B cell (primary cell): ENCODE measurements at regions of chr9 and their contacts with region 1.

Region 1: DNA sequence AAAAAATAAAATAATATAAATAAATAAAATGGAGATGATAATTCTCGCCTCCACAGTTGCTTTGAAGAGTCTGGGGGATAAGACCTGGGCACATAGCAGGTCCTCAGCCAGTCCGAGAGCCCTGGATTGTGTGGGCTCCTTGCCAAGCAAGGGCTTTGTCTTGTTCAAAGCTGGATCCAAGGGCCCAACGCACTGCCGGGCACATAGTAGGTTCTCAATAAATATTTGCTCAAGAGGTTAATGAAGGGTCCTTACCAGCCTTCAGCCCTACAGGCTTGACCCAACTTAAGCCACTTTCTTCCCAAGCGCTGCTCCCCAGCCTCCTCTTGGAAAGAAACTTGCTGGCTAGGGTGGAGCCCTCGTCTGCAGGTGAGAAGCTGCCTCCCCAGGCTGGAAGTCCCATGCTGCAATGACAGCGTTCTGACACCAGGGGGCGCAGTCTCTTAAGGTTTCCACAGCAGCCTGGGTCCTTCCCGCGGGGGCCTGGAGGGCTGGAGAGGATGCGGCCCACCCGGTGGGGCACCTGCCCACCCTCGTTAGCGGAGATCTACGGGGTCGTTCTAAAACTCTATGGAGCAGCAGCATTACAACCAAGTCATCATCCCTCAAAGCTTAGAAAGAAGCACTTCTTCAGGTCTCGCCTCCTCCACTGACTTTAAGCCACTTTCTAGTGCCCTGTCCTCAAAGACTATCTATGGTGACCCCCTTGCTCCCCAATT is 115.2 kb downstream of the LHX2 start:
- DNase-seq: peak; percentile 87
- ATAC-seq: peak; percentile 88
- H3K4me3 ChIP-seq: no peak overlapping the region
- H3K4me3 Mint-ChIP-seq: peak overlapping the region; percentile 2
- H3K27ac ChIP-seq: no peak overlapping the region
- H3K27ac Mint-ChIP-seq: peak overlapping the region; percentile 74
- H3K4me1 ChIP-seq: peaks cover 4 to 16% of the 10 kb centered on the region in 2 donors
- H3K4me1 Mint-ChIP-seq: peaks cover 21% of the 10 kb centered on the region
- H3K27me3 ChIP-seq: no peaks in the 10 kb centered on the region
- H3K27me3 Mint-ChIP-seq: no peaks in the 10 kb centered on the region
- CTCF ChIP-seq: peak; percentile 99

Region 2: GRCh38 chr9:124218438-124218982 is 91.8 kb after region 1 on chr9:
- CTCF ChIA-PET with region 1: interaction called, 26 read pairs
- POLR2A ChIA-PET with region 1: no interaction called
- intact Hi-C with region 1: loop called (anchors 2 kb)
- DNase-seq: peak; percentile 90
- ATAC-seq: peak; percentile 62
- H3K4me3 ChIP-seq: peak overlapping the region in 1 of 5 experiments; percentile 40
- H3K4me3 Mint-ChIP-seq: peak overlapping the region; percentile 78
- H3K27ac ChIP-seq: peak overlapping the region; percentile 94 to 95
- H3K27ac Mint-ChIP-seq: peak overlapping the region; percentile 98
- H3K4me1 ChIP-seq: peaks cover 67 to 82% of the 10 kb centered on the region in 2 donors
- H3K4me1 Mint-ChIP-seq: peaks cover 85% of the 10 kb centered on the region
- H3K27me3 ChIP-seq: no peaks in the 10 kb centered on the region
- H3K27me3 Mint-ChIP-seq: no peaks in the 10 kb centered on the region
- CTCF ChIP-seq: no peak

Region 3: GRCh38 chr9:124267271-124267807 is 140.6 kb after region 1 on chr9:
- CTCF ChIA-PET with region 1: interaction called, 11 read pairs
- POLR2A ChIA-PET with region 1: no interaction called
- intact Hi-C with region 1: no loop called
- DNase-seq: peak; percentile 70
- ATAC-seq: peak; percentile 54
- H3K4me3 ChIP-seq: no peak overlapping the region
- H3K4me3 Mint-ChIP-seq: peak overlapping the region; percentile 74
- H3K27ac ChIP-seq: peak overlapping the region; percentile 73
- H3K27ac Mint-ChIP-seq: peak overlapping the region; percentile 91
- H3K4me1 ChIP-seq: peaks cover 69 to 98% of the 10 kb centered on the region in 2 donors
- H3K4me1 Mint-ChIP-seq: peaks cover 83% of the 10 kb centered on the region
- H3K27me3 ChIP-seq: no peaks in the 10 kb centered on the region
- H3K27me3 Mint-ChIP-seq: no peaks in the 10 kb centered on the region
- CTCF ChIP-seq: no peak

Region 4: DNA sequence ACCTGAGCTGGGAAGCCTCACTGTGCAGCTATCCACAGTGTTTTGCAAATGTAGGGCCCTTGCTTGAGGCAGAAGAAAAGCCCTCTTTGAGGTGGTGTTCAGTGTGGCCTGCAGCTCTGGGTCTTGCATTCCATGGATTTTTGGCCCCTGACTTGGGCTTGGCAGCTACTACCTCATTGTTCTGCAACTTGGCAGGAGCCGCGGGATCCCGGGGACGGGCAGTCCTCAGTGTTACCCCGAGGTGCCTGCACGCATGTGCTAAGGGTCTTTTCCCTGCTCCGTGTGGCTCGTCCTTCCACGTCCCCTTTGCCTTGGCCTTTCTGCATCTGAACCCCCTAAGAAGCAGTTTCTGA is 170.8 kb after region 1 on chr9:
- CTCF ChIA-PET with region 1: interaction called, 60 read pairs
- POLR2A ChIA-PET with region 1: interaction called, 5 read pairs
- intact Hi-C with region 1: loop called (anchors 1 kb)
- DNase-seq: no peak
- ATAC-seq: no peak
- H3K4me3 ChIP-seq: no peak overlapping the region
- H3K4me3 Mint-ChIP-seq: no peak overlapping the region
- H3K27ac ChIP-seq: no peak overlapping the region
- H3K27ac Mint-ChIP-seq: no peak overlapping the region
- H3K4me1 ChIP-seq: peaks cover 54 to 66% of the 10 kb centered on the region in 2 donors
- H3K4me1 Mint-ChIP-seq: peaks cover 69% of the 10 kb centered on the region
- H3K27me3 ChIP-seq: no peaks in the 10 kb centered on the region
- H3K27me3 Mint-ChIP-seq: no peaks in the 10 kb centered on the region
- CTCF ChIP-seq: no peak

Region 5: DNA sequence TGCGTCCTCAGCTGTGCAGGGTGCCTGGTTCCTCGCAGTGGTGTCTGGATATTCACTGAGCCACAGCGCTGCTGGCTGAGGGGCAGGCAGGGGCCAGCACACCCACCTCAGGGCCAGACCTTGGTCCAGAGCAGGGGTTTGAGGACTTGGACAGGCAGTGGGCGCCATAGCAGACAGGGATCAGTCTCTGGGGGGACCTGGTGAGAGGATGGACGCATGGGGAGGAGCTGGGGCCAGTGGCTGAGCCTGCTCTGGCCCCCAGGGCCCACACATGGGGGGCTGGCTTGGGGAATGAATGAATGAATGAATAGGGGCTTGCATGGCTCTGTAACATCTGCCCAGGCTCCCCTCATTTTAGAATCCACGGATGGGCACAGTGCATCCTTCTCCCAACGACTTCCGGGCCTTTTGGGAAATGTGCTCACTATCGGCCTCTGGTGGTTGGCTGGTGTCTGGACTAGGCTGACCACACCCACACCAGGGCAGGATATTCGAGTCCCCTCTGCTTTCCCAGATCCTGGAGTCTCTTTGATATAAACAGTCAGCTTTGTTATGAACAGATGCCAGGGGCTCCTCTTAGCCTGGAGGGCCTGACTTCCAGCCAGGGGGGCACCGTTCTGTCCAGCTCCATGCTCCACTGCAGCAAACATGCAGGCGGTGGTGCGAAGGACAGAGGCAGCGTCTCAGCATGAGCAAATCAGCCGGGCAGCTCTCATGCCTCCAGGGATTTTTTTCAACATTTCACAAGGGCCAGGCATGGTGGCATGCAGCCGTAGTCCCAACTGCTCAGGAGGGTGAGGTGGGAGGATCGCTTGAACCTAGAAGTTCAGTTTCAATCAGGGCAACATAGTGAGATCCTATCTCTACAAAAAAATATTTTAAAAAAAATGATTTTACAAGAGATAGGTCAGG is 193.6 kb after region 1 on chr9:
- CTCF ChIA-PET with region 1: interaction called, 59 read pairs
- POLR2A ChIA-PET with region 1: no interaction called
- intact Hi-C with region 1: loop called (anchors 1 kb)
- DNase-seq: peak; percentile 57
- ATAC-seq: peak; percentile 42
- H3K4me3 ChIP-seq: no peak overlapping the region
- H3K4me3 Mint-ChIP-seq: no peak overlapping the region
- H3K27ac ChIP-seq: no peak overlapping the region
- H3K27ac Mint-ChIP-seq: peak overlapping the region; percentile 63
- H3K4me1 ChIP-seq: peaks cover 0 to 18% of the 10 kb centered on the region in 2 donors
- H3K4me1 Mint-ChIP-seq: peaks cover 32% of the 10 kb centered on the region
- H3K27me3 ChIP-seq: no peaks in the 10 kb centered on the region
- H3K27me3 Mint-ChIP-seq: no peaks in the 10 kb centered on the region
- CTCF ChIP-seq: peak; percentile 67

Region 6: GRCh38 chr9:124392871-124393460 is 266.2 kb after region 1 on chr9:
- CTCF ChIA-PET with region 1: interaction called, 54 read pairs
- POLR2A ChIA-PET with region 1: no interaction called
- intact Hi-C with region 1: loop called (anchors 2 kb)
- DNase-seq: no peak
- ATAC-seq: no peak
- H3K4me3 ChIP-seq: no peak overlapping the region
- H3K4me3 Mint-ChIP-seq: no peak overlapping the region
- H3K27ac ChIP-seq: no peak overlapping the region
- H3K27ac Mint-ChIP-seq: no peak overlapping the region
- H3K4me1 ChIP-seq: no peaks in the 10 kb centered on the region
- H3K4me1 Mint-ChIP-seq: peaks cover 28% of the 10 kb centered on the region
- H3K27me3 ChIP-seq: no peaks in the 10 kb centered on the region
- H3K27me3 Mint-ChIP-seq: no peaks in the 10 kb centered on the region
- CTCF ChIP-seq: no peak